ENCODE measurements at regions of chr7 and their contacts with region 1.

Region 1: DNA sequence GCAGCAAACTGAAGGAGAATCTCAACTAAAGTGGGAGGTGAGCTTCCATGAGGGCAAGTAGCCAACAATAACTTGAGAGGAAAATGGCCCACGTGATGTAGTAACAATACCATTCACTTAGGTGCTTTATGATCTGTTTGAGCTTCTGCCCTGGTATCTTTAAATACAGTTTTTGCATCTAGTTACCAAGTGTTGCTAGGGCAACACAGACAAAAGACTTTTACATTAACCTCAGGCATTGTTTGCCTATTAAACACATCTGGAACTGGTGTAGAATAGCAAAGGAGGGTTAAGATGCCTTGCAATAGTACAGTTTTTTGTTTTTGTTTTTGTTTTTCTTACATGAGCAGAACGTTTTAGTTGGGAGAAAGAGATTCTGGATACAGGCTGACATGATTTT is 97.7 kb upstream of the MTPN start:
- DNase-seq: no peak
- ATAC-seq: no peak
- H3K4me3 ChIP-seq: no peak overlapping the region
- H3K27ac ChIP-seq: no peak overlapping the region
- H3K4me1 ChIP-seq: peaks cover 14 to 26% of the 10 kb centered on the region in 2 experiments
- H3K27me3 ChIP-seq: no peaks in the 10 kb centered on the region
- CTCF ChIP-seq: no peak
- EP300 ChIP-seq: no peak
- POLR2A ChIP-seq: no peak
- RAD21 ChIP-seq: no peak

Region 2: DNA sequence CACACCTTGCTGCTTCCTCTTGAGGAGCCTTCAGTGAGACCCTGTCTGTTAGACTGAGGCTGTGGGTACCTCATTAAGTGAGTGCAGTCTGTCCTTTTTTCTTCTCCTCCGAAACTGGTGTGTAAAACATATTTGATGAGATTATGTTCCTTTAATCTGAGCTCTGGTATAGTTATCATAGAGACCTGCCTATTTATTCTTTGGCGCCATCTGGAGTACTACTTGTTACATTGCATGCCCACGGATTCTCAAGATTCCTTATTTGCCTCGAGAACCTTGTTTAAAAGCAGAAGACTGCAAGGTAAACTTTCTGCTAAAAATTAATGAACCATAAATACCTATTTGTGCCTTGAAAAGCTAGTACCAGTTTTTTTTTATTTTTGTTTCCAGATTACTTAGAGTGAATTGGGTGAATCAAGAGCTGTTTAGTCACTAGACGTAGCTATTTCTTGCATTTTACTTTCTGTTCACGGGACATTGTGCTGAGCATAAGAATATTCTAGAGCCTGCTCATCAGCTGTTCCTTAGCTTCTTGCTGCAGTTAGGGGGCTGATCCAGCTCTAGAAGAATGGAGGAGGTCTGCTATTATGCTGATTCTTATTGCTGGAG is 429.4 kb before region 1 on chr7:
- CTCF ChIA-PET with region 1: no interaction called
- POLR2A ChIA-PET with region 1: no interaction called
- in situ Hi-C with region 1: no loop called
- intact Hi-C with region 1: no loop called
- DNase-seq: peak; percentile 42 to 61 (median 52)
- ATAC-seq: peak; percentile 81
- H3K4me3 ChIP-seq: no peak overlapping the region
- H3K27ac ChIP-seq: no peak overlapping the region
- H3K4me1 ChIP-seq: peaks cover under 1 to 6% of the 10 kb centered on the region in 2 experiments; a peak in 2 of 5 replicates
- H3K27me3 ChIP-seq: no peaks in the 10 kb centered on the region
- CTCF ChIP-seq: peak; percentile 64 to 82 (median 70); a peak in 5 of 6 replicates
- EP300 ChIP-seq: no peak
- POLR2A ChIP-seq: no peak
- RAD21 ChIP-seq: peak; percentile 69 to 72

Region 3: DNA sequence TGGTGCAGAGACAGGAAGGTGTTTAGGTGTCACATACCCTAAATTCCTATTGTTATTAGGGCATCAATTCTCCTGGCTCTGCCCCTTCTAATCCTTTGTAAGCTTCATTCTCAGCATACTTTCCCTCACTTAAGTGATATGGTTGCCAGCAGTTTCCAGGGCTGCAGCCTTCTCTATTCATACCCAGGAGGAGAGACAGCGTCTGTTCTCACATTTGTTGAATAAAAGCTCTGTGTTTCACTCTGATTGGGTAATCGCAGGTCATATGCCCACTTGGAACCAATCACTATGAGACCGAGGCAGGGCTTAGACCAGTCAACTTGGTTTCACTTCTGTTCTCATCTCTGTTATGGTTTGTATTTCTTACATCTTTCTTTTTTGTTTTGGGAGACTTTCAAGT is 11.9 kb after region 1 on chr7:
- CTCF ChIA-PET with region 1: interaction called, 3 read pairs
- POLR2A ChIA-PET with region 1: interaction called, 15 read pairs
- in situ Hi-C with region 1: no loop called
- intact Hi-C with region 1: no loop called
- DNase-seq: peak; percentile 39 to 84 (median 62)
- ATAC-seq: peak; percentile 96
- H3K4me3 ChIP-seq: no peak overlapping the region
- H3K27ac ChIP-seq: no peak overlapping the region
- H3K4me1 ChIP-seq: no peaks in the 10 kb centered on the region; a peak in 1 of 5 replicates
- H3K27me3 ChIP-seq: no peaks in the 10 kb centered on the region
- CTCF ChIP-seq: no peak
- EP300 ChIP-seq: no peak
- POLR2A ChIP-seq: peak; percentile 44; the same call in 1 of the 2 replicates
- RAD21 ChIP-seq: no peak

Measured in K562 (cell line).